ENCODE measurements at regions of chr20 and their contacts with region 1.

Region 1: DNA sequence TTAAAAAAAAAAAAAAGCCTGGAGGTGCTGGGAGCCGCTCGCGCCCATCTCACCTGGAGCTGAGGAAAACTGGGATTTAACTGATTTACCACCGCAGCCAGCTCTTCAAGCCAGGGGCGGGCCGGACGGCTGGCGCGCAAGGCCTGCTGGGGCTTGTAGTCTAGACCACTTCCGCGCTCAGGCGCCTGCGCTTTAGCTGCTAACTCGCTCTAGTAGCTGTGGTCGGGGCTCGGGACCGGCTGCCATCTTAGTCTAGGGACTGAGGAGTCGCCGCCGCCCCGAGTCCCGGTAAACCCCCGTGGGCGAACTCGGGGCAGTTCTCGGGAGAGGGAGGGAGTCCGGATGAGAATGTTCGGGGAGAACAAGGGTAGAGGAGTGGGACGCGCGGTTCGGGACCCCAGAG is at the start of gene ITCH:
- DNase-seq: peak; percentile 98
- H3K4me3 ChIP-seq: peak within 1 kb of the TSS; percentile 77 to 97 (median 82)
- H3K27ac ChIP-seq: peak within 1 kb of the TSS; percentile 89 to 95 (median 91)
- H3K4me1 ChIP-seq: peaks cover 0 to 46% (median 39%) of the 10 kb centered on the region in 4 donors
- H3K27me3 ChIP-seq: no peaks in the 10 kb centered on the region
- CTCF ChIP-seq: no peak
- EP300 ChIP-seq: no peak
- POLR2A ChIP-seq: peak; percentile 93
- total RNA-seq, gene ITCH: 50.2 to 60.6 (median 55.2) TPM

Region 2: GRCh38 chr20:34302723-34303528 is 60.1 kb before region 1 on chr20 and contains the start of gene AHCY:
- intact Hi-C with region 1: loop called (anchors 2 kb)
- DNase-seq: peak; percentile 98
- H3K4me3 ChIP-seq: peak within 1 kb of the TSS; percentile 73 to 93 (median 86)
- H3K27ac ChIP-seq: peak within 1 kb of the TSS; percentile 92 to 96 (median 94)
- H3K4me1 ChIP-seq: peaks cover 0 to 18% (median 18%) of the 10 kb centered on the region in 4 donors
- H3K27me3 ChIP-seq: no peaks in the 10 kb centered on the region
- CTCF ChIP-seq: no peak
- EP300 ChIP-seq: peak in 1 of 4 donors; percentile 5
- POLR2A ChIP-seq: peak in 1 of 2 donors; percentile 12
- total RNA-seq, gene AHCY: 76.4 to 89.5 (median 80.7) TPM

Region 3: DNA sequence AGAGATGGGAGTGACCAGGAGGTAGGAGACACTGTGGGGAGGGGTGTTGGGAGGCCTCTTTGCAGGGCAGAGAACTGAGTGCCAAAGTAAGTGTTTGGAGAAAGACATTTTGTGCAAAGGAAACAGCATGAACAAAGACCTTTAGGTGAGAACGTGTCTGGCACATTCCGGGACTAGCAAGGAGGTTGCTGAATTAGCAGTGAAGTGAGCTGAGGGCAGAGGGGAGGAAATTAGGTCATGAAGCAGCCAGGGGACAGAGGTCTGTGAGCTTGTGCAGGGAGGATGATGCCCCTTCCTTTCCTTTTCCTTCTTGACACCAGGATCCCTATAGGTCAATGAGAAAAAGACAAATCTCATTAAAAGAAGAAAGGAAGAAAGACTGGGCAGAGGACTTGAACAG is 38.5 kb before region 1 on chr20:
- intact Hi-C with region 1: no loop called
- DNase-seq: no peak
- H3K4me3 ChIP-seq: no peak overlapping the region
- H3K27ac ChIP-seq: no peak overlapping the region
- H3K4me1 ChIP-seq: no peaks in the 10 kb centered on the region
- H3K27me3 ChIP-seq: no peaks in the 10 kb centered on the region
- CTCF ChIP-seq: no peak
- EP300 ChIP-seq: no peak
- POLR2A ChIP-seq: no peak

Region 4: GRCh38 chr20:34334654-34335407 is 28.2 kb before region 1 on chr20:
- intact Hi-C with region 1: no loop called
- DNase-seq: peak; percentile 75
- H3K4me3 ChIP-seq: no peak overlapping the region
- H3K27ac ChIP-seq: peak overlapping the region in 2 of 4 donors; percentile 26 to 35
- H3K4me1 ChIP-seq: no peaks in the 10 kb centered on the region
- H3K27me3 ChIP-seq: no peaks in the 10 kb centered on the region
- CTCF ChIP-seq: no peak
- EP300 ChIP-seq: no peak
- POLR2A ChIP-seq: no peak

Region 5: GRCh38 chr20:34403908-34404307 is 40.8 kb after region 1 on chr20:
- intact Hi-C with region 1: no loop called
- DNase-seq: no peak
- H3K4me3 ChIP-seq: no peak overlapping the region
- H3K27ac ChIP-seq: no peak overlapping the region
- H3K4me1 ChIP-seq: peaks cover 0 to 32% (median 13%) of the 10 kb centered on the region in 4 donors
- H3K27me3 ChIP-seq: no peaks in the 10 kb centered on the region
- CTCF ChIP-seq: no peak
- EP300 ChIP-seq: no peak
- POLR2A ChIP-seq: no peak

Region 6: GRCh38 chr20:35039146-35039545 is 676.1 kb after region 1 on chr20:
- intact Hi-C with region 1: no loop called
- DNase-seq: no peak
- H3K4me3 ChIP-seq: no peak overlapping the region
- H3K27ac ChIP-seq: no peak overlapping the region
- H3K4me1 ChIP-seq: no peaks in the 10 kb centered on the region
- H3K27me3 ChIP-seq: no peaks in the 10 kb centered on the region
- CTCF ChIP-seq: no peak
- EP300 ChIP-seq: no peak
- POLR2A ChIP-seq: no peak